ENCODE measurements at regions of chr13 and their contacts with region 1.

Region 1: DNA sequence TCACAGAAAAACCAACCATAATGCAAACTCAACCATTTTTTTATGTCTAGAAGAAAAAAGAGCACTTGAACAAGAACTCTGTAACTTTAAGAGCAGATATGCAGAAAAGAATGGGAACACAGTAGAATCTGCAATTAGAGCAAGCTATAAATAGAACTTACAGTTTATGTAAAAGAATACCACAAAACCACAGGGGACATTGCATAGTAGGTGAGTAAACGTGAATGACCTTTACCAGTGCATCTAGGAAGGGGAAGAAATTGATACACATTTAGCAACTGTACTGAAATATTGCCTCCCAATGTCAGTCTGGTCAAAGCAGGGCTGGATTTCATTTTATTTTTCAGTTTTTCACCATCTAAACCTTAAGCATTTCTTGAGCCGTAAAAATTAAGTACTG is 242.2 kb upstream of the EDNRB start:
- DNase-seq: no peak
- ATAC-seq: no peak
- H3K4me3 ChIP-seq: no peak overlapping the region
- H3K4me3 Mint-ChIP-seq: no peak overlapping the region
- H3K27ac ChIP-seq: no peak overlapping the region
- H3K27ac Mint-ChIP-seq: no peak overlapping the region
- H3K4me1 ChIP-seq: no peaks in the 10 kb centered on the region
- H3K4me1 Mint-ChIP-seq: no peaks in the 10 kb centered on the region
- H3K27me3 ChIP-seq: no peaks in the 10 kb centered on the region
- H3K27me3 Mint-ChIP-seq: peaks cover 3% of the 10 kb centered on the region
- CTCF ChIP-seq: no peak

Region 2: DNA sequence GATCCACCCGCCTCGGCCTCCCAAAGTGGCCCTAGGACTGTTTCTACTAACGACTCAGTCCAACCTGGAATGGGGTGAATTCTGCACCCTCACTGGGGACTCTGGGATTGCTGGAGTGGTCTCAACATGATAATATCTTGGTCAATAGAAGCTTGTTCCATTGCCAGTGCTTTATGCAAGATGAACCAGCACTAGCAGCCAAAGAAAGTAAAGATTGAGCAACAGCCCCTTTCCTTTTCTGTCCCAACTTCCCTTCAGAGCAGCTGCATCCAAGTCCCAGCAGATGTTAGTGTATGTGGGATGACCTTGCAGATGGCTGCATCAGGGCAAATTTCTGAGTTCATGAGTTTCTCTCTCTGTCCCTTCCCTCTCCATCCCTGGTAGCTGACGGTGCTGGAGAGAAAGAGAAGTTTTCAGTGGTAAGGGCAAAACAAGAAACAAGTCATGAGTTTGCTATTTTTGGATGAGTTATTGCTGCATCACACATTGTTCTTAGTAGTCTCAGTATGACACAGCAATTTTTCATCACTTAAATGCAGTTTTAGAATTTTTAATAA is 58.6 kb before region 1 on chr13:
- CTCF ChIA-PET with region 1: no interaction called
- POLR2A ChIA-PET with region 1: no interaction called
- intact Hi-C with region 1: no loop called
- DNase-seq: no peak
- ATAC-seq: no peak
- H3K4me3 ChIP-seq: no peak overlapping the region
- H3K4me3 Mint-ChIP-seq: no peak overlapping the region
- H3K27ac ChIP-seq: no peak overlapping the region
- H3K27ac Mint-ChIP-seq: no peak overlapping the region
- H3K4me1 ChIP-seq: no peaks in the 10 kb centered on the region
- H3K4me1 Mint-ChIP-seq: no peaks in the 10 kb centered on the region
- H3K27me3 ChIP-seq: no peaks in the 10 kb centered on the region
- H3K27me3 Mint-ChIP-seq: no peaks in the 10 kb centered on the region
- CTCF ChIP-seq: no peak

Region 3: GRCh38 chr13:78147905-78148304 is 12.9 kb before region 1 on chr13:
- CTCF ChIA-PET with region 1: no interaction called
- POLR2A ChIA-PET with region 1: no interaction called
- intact Hi-C with region 1: loop called in 1 of 2 experiments (anchors 1 kb)
- DNase-seq: no peak
- ATAC-seq: no peak
- H3K4me3 ChIP-seq: no peak overlapping the region
- H3K4me3 Mint-ChIP-seq: no peak overlapping the region
- H3K27ac ChIP-seq: no peak overlapping the region
- H3K27ac Mint-ChIP-seq: no peak overlapping the region
- H3K4me1 ChIP-seq: no peaks in the 10 kb centered on the region
- H3K4me1 Mint-ChIP-seq: no peaks in the 10 kb centered on the region
- H3K27me3 ChIP-seq: no peaks in the 10 kb centered on the region
- H3K27me3 Mint-ChIP-seq: peaks cover 4% of the 10 kb centered on the region
- CTCF ChIP-seq: no peak

Region 4: GRCh38 chr13:79932556-79932955 is 1771.8 kb after region 1 on chr13:
- CTCF ChIA-PET with region 1: no interaction called
- POLR2A ChIA-PET with region 1: no interaction called
- intact Hi-C with region 1: no loop called
- DNase-seq: no peak
- ATAC-seq: no peak
- H3K4me3 ChIP-seq: no peak overlapping the region
- H3K4me3 Mint-ChIP-seq: no peak overlapping the region
- H3K27ac ChIP-seq: no peak overlapping the region
- H3K27ac Mint-ChIP-seq: no peak overlapping the region
- H3K4me1 ChIP-seq: no peaks in the 10 kb centered on the region
- H3K4me1 Mint-ChIP-seq: no peaks in the 10 kb centered on the region
- H3K27me3 ChIP-seq: no peaks in the 10 kb centered on the region
- H3K27me3 Mint-ChIP-seq: no peaks in the 10 kb centered on the region
- CTCF ChIP-seq: no peak